PC-3 (cell line): ENCODE measurements at regions of chr17 and their contacts with region 1.

Region 1: DNA sequence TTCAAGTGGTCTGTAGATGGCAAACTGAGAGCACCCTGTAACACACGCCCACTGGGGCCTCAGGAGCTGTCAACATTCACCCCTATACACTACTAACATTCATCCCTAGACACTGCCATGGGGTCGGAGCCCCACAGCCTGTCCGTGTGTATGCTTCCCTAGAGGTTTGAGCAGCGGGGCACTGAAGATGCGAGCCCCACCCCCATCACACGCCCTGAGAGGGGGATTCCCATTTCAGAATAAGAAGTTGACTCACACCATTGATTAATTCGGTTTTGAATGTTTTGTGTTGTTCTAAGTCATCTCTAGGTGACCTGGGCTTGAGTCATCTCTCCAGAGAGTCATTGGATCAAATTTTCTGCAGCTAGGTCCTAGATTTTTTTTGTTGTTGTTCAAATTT is 37.3 kb upstream of the MMD start:
- DNase-seq: peak; percentile 95
- ATAC-seq: peak; percentile 54
- H3K4me3 ChIP-seq: no peak overlapping the region
- H3K27ac ChIP-seq: peak overlapping the region; percentile 77
- H3K4me1 ChIP-seq: peaks cover 46% of the 10 kb centered on the region
- H3K27me3 ChIP-seq: no peaks in the 10 kb centered on the region
- CTCF ChIP-seq: no peak

Region 2: GRCh38 chr17:55348749-55349354 is 110.1 kb before region 1 on chr17:
- CTCF ChIA-PET with region 1: no interaction called
- POLR2A ChIA-PET with region 1: no interaction called
- intact Hi-C with region 1: no loop called
- DNase-seq: peak; percentile 72
- ATAC-seq: peak; percentile 83
- H3K4me3 ChIP-seq: no peak overlapping the region
- H3K27ac ChIP-seq: no peak overlapping the region
- H3K4me1 ChIP-seq: no peaks in the 10 kb centered on the region
- H3K27me3 ChIP-seq: no peaks in the 10 kb centered on the region
- CTCF ChIP-seq: peak; percentile 96

Region 3: DNA sequence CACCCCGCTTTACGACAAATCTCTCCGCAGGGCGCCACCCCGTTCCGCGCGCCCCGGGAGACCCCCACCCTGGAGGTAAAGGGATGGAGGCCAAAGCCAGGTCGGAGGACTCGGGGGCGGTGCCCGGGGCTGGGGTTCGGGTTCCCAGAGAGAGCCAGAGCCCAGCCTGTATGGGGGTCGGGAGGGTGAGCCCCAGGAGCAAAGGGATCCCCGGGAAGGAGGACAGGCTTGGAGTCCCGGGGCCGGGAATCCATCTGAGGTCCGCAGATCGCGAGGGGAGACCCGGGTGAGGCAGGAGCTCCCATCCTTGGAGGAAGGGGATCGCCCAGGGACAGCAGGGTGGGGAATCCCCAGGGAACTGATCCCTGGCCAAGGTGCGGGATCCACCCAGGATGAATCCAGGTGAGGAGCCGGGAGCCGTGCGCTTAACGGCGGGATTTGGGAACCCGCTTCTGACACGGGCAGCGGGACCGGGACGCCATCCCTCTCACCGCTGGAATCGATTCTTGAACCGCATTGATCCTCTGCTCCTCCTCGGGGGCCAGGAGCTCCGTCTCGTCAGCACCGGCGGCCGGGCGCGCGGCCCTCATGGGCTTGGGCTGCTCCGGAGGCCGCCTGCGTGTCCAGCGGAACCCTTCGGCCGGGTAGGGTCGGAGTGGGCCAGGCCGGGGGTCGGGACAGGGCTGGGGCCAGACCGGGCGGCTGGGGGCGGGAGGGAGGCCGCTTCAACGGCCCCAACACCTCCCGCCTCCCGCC is 37.6 kb before region 1 on chr17 and contains the start of gene MMD:
- CTCF ChIA-PET with region 1: no interaction called
- POLR2A ChIA-PET with region 1: no interaction called
- intact Hi-C with region 1: loop called (anchors 5 kb)
- DNase-seq: peak; percentile 34
- ATAC-seq: peak; percentile 53
- H3K4me3 ChIP-seq: peak within 1 kb of the TSS; percentile 92
- H3K27ac ChIP-seq: peak within 1 kb of the TSS; percentile 16; the same call in 1 of the 2 replicates
- H3K4me1 ChIP-seq: peaks cover 13% of the 10 kb centered on the region
- H3K27me3 ChIP-seq: peaks cover 14% of the 10 kb centered on the region
- CTCF ChIP-seq: no peak
- total RNA-seq, gene MMD: 10.9 and 24.1 TPM in 2 replicates

Region 4: DNA sequence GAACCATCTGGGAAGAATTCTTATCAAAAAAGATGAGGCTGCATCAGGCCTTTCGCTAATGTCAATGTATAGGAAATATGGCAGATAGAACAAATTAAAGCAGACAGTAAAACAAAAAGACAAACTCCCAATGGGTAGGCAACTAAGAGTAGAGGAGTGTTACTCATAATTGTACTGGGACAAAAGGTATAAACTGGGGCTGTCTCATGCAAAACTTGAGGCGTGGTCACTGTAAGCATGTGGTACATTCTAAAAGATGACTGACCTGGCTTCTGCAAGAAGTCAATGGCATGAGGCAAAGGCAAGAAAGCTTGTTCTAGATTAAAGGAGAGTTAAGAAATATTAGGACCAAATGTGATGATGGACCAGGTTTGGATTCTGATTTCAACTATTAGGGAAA is 25.6 kb after region 1 on chr17:
- CTCF ChIA-PET with region 1: no interaction called
- POLR2A ChIA-PET with region 1: no interaction called
- intact Hi-C with region 1: no loop called
- DNase-seq: peak; percentile 7
- ATAC-seq: no peak
- H3K4me3 ChIP-seq: no peak overlapping the region
- H3K27ac ChIP-seq: no peak overlapping the region
- H3K4me1 ChIP-seq: peaks cover 4% of the 10 kb centered on the region; the same call in 1 of the 2 replicates
- H3K27me3 ChIP-seq: no peaks in the 10 kb centered on the region
- CTCF ChIP-seq: no peak

Region 5: DNA sequence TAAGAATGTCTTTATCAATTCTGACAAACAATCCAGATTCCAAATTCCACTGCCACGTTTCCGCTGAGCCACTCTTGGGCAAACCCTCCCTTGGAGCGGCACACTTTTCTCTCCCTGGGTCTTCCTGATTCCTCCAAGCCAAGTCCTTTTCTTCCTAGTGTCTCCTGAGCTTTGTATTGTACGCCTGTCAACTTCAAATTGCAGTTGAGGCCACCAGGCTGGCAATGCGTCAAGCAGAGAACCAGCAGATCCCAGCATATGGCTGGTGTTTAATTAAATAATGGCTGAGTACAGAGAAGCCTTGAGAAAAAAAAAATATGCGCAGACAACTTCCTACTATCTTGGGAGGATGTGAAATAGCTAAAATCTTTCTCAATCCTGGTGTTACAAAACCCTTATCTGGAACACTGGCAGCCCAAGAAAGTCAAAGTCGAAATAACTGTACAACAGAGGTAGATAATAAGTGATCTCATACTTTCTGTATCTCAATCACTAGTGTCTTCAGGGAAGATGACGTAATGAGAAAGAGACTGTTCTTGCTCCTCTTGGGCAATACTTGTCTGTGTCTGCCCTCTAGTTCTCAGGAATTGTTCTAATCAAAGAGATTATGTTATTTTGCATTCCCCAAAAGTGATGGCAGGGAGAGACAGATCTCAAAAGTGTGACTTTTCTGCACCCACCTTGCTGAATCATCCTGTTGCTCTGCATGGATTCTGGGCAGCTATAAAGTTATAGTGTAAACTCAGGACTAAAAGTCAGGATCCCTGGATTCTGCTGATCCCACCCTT is 37.3 kb after region 1 on chr17:
- CTCF ChIA-PET with region 1: no interaction called
- POLR2A ChIA-PET with region 1: no interaction called
- intact Hi-C with region 1: loop called (anchors 1 kb)
- DNase-seq: no peak
- ATAC-seq: no peak
- H3K4me3 ChIP-seq: no peak overlapping the region
- H3K27ac ChIP-seq: no peak overlapping the region
- H3K4me1 ChIP-seq: peaks cover 16% of the 10 kb centered on the region
- H3K27me3 ChIP-seq: no peaks in the 10 kb centered on the region
- CTCF ChIP-seq: no peak